ENCODE measurements at regions of chr2 and their contacts with region 1.

Region 1: DNA sequence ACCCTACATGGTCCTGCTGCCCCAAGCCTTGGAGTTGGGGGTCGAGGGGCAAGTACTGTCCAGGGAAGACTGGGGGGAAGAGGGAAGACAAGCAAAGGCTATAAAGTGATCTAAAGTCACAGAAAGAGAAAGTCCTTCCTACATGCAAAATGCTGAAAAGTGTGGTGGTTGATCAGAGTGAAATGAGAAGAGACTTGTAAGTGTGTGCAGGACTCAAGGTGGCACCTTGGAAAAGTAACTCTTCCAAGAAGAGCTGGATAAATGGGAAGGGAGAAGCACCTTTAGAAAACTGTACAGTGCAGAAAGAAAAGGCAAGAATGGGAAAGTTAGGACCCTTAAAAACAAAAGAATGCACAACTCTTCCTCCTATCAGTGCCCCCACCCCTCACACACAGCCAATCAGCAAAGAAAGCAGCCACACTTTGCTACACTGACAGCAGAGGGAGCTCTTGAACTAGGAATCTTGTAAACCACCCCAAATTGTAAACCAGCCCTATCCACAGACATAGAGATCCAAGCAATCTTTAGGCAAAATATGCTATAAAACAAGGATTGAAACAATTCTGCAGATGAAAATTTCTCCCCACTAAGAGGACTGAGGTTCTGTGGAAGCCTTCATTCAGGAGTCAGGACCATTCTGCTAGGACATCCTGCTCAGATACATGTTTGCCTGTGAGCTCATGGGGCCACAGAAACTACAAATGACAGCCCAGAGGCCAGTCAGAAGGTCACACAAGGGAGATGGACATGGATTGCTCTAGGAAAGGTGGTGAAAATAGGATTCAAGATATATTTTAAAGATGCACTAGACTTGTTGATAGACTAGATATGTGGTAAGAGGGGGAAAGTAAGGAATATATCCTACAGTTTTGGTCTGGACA is 146.4 kb downstream of the FTCDNL1 start:
- DNase-seq: peak; percentile 73
- H3K27ac ChIP-seq: no peak overlapping the region
- CTCF ChIP-seq: peak; percentile 55

Region 2: DNA sequence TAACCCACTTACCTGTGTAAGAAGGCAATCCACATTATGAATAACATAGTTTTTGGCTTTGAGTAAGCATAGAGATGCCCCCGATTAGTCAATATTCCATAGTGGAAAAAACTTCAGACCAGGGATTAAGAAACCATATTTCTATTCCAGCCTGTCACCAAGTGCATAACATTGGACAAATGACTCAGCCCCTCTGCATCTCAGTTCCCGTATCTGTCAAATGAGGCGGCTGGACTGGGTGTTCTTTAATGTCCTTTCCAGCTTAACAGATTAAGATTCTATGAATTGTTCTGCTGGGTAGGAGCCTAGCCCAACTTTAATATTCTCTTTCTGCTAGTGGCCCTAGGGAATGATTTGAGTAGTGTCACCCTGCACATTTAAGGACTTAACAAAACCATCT is 158.2 kb after region 1 on chr2:
- CTCF ChIA-PET with region 1: interaction called, 10 read pairs
- POLR2A ChIA-PET with region 1: no interaction called
- DNase-seq: no peak
- H3K27ac ChIP-seq: no peak overlapping the region
- CTCF ChIP-seq: no peak

Region 3: DNA sequence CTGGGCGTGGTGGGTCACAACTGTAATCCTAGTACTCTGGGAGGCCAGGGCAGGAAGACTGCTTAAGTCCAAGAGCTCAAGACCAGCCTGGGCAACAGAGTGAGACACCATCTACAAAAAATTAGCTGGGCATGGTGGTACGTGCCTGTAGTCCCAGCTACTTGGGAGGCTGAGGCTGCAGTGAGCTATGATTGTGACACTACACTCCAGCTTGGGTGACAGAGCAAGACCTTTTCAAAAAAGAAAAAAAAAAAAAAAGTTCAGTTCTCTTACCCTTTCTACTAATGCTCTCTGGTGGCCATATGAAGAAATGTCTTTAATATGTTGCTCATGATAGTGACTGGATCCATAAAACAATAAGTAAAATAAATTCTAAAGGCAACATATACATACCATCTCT is 235.8 kb after region 1 on chr2:
- CTCF ChIA-PET with region 1: interaction called, 19 read pairs
- POLR2A ChIA-PET with region 1: no interaction called
- DNase-seq: no peak
- H3K27ac ChIP-seq: no peak overlapping the region
- CTCF ChIP-seq: no peak

Measured in RWPE1 (cell line).